Activated CD4-positive, alpha-beta memory T cell treated with anti-CD3 and anti-CD28 coated beads for 36 hours (primary cell): ENCODE measurements at regions of chr17 and their contacts with region 1.

Region 1: GRCh38 chr17:40559954-40560591 is 5.2 kb downstream of the CCR7 start:
- DNase-seq: peak; percentile 90
- H3K4me3 Mint-ChIP-seq: peak overlapping the region; percentile 93
- H3K27ac Mint-ChIP-seq: peak overlapping the region; percentile 96
- H3K4me1 Mint-ChIP-seq: peaks cover 80% of the 10 kb centered on the region
- H3K27me3 Mint-ChIP-seq: no peaks in the 10 kb centered on the region

Region 2: GRCh38 chr17:40278414-40278813 is 281.7 kb before region 1 on chr17:
- CTCF ChIA-PET with region 1: no interaction called
- POLR2A ChIA-PET with region 1: no interaction called
- intact Hi-C with region 1: no loop called
- DNase-seq: no peak
- H3K4me3 Mint-ChIP-seq: no peak overlapping the region
- H3K27ac Mint-ChIP-seq: no peak overlapping the region
- H3K4me1 Mint-ChIP-seq: peaks cover 20% of the 10 kb centered on the region
- H3K27me3 Mint-ChIP-seq: no peaks in the 10 kb centered on the region

Region 3: GRCh38 chr17:40399185-40399584 is 160.9 kb before region 1 on chr17:
- CTCF ChIA-PET with region 1: interaction called, 27 read pairs
- POLR2A ChIA-PET with region 1: no interaction called
- intact Hi-C with region 1: no loop called
- DNase-seq: no peak
- H3K4me3 Mint-ChIP-seq: no peak overlapping the region
- H3K27ac Mint-ChIP-seq: peak overlapping the region; percentile 54
- H3K4me1 Mint-ChIP-seq: peaks cover 18% of the 10 kb centered on the region
- H3K27me3 Mint-ChIP-seq: no peaks in the 10 kb centered on the region

Region 4: GRCh38 chr17:40474419-40475002 is 85.6 kb before region 1 on chr17:
- CTCF ChIA-PET with region 1: interaction called, 17 read pairs
- POLR2A ChIA-PET with region 1: no interaction called
- intact Hi-C with region 1: no loop called
- DNase-seq: no peak
- H3K4me3 Mint-ChIP-seq: no peak overlapping the region
- H3K27ac Mint-ChIP-seq: peak overlapping the region; percentile 24
- H3K4me1 Mint-ChIP-seq: peaks cover 19% of the 10 kb centered on the region
- H3K27me3 Mint-ChIP-seq: no peaks in the 10 kb centered on the region

Region 5: DNA sequence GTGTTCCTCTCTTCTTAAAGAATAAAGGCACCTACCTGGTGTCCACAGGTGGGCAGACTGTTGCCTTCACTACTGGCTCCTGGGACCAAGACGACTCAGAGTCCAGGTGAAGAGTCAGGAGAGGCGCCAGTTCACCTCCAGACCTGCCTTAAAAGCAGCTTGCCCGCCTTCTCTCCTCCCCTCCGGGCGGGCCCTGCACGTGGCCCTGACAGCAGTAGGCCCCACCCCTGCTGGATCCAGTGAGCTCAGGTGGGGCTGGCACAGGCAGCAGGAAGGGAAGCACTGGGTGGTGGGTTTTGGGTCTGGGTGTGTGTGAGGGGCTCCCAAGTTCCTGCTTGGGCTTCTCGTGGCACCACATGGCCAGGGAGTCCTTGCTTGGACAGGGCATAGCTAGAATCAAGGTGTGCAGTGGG is 58.6 kb before region 1 on chr17 and contains the start of gene TNS4:
- CTCF ChIA-PET with region 1: no interaction called
- POLR2A ChIA-PET with region 1: no interaction called
- intact Hi-C with region 1: no loop called
- DNase-seq: no peak
- H3K4me3 Mint-ChIP-seq: no peak within 1 kb of the TSS
- H3K27ac Mint-ChIP-seq: no peak within 1 kb of the TSS
- H3K4me1 Mint-ChIP-seq: peaks cover 4% of the 10 kb centered on the region
- H3K27me3 Mint-ChIP-seq: peaks cover 1% of the 10 kb centered on the region
- total RNA-seq, gene TNS4: 14.5 to 15.2 TPM

Region 6: GRCh38 chr17:40542558-40543411 is 17.3 kb before region 1 on chr17:
- CTCF ChIA-PET with region 1: interaction called, 392 read pairs
- POLR2A ChIA-PET with region 1: interaction called, 104 read pairs
- intact Hi-C with region 1: loop called (anchors 1 kb)
- DNase-seq: peak; percentile 76
- H3K4me3 Mint-ChIP-seq: peak overlapping the region; percentile 56
- H3K27ac Mint-ChIP-seq: peak overlapping the region; percentile 90
- H3K4me1 Mint-ChIP-seq: peaks cover 78% of the 10 kb centered on the region
- H3K27me3 Mint-ChIP-seq: no peaks in the 10 kb centered on the region

Region 7: DNA sequence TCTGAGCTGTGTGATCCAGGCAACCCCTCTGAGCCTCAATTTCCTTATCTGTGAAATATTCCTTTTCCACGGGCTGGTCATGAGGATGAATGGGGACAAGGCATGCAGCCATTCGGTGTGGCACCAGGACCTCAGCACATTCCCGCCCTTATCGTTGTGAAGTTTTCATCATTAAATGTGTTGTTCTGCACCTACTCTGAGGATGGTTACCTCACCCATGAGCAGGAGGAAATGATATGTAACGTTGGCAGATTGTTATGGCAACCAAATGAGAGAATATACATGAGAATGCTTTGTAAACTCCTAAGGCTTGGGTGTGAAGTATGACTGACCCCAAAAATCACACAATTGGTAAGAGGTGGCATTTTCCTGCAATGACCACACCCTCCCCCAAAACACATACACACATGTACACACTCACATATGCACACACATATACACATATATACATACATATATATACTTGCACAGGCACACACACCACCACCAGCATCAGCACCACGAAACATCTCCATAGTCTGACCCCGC is 48.1 kb after region 1 on chr17:
- CTCF ChIA-PET with region 1: interaction called, 172 read pairs
- POLR2A ChIA-PET with region 1: interaction called, 169 read pairs
- intact Hi-C with region 1: loop called (anchors 1 kb)
- DNase-seq: peak; percentile 64
- H3K4me3 Mint-ChIP-seq: peak overlapping the region; percentile 5
- H3K27ac Mint-ChIP-seq: peak overlapping the region; percentile 78
- H3K4me1 Mint-ChIP-seq: peaks cover 95% of the 10 kb centered on the region
- H3K27me3 Mint-ChIP-seq: no peaks in the 10 kb centered on the region

Region 8: DNA sequence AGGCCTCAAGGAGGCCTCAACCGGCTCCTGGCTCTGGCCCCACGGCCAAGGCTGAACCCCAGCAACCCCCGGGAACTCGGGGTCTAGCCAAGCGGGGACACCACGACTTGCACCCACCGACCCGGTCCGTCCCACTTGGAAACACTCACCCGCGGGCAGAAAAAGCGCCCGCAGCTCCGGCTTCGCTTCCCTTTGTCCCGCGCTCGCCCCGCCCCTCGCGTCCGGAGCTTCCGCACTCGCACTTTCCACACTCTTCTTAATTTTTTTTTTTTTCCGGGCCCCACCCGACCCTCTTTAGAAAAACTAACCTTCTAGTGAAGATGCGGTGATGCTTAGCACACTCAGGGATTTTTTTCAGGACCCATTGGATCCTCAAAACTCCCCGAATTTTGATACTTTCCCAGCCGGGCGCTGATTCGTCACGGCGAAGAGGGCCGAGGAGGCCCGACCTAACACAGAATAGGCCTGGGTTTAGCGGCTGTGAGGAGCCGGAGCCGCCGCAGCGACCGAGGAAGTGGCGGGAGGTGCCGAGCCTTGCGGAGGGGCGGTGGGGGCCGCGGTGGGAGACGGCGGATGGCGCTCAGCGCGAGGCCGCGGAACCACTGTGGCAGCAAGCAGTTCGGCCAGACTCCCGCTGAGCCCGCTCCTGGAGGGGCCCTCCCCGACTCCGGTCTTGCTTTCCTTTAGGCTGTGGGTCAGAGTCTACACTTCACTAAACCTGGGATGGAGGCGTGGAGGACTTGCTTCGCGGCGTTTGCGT is 87.7 kb after region 1 on chr17 and contains the start of gene SMARCE1:
- CTCF ChIA-PET with region 1: interaction called, 17 read pairs
- POLR2A ChIA-PET with region 1: interaction called, 28 read pairs
- intact Hi-C with region 1: no loop called
- DNase-seq: peak; percentile 71
- H3K4me3 Mint-ChIP-seq: peak within 1 kb of the TSS; percentile 92
- H3K27ac Mint-ChIP-seq: peak within 1 kb of the TSS; percentile 97
- H3K4me1 Mint-ChIP-seq: peaks cover 41% of the 10 kb centered on the region
- H3K27me3 Mint-ChIP-seq: no peaks in the 10 kb centered on the region
- total RNA-seq, gene SMARCE1: 103 to 104 TPM

Region 9: GRCh38 chr17:40791787-40792436 is 231.8 kb after region 1 on chr17:
- CTCF ChIA-PET with region 1: no interaction called
- POLR2A ChIA-PET with region 1: no interaction called
- intact Hi-C with region 1: no loop called
- DNase-seq: no peak
- H3K4me3 Mint-ChIP-seq: no peak overlapping the region
- H3K27ac Mint-ChIP-seq: no peak overlapping the region
- H3K4me1 Mint-ChIP-seq: no peaks in the 10 kb centered on the region
- H3K27me3 Mint-ChIP-seq: peaks cover 21% of the 10 kb centered on the region